ENCODE measurements at regions of chr2 and their contacts with region 1.

Region 1: DNA sequence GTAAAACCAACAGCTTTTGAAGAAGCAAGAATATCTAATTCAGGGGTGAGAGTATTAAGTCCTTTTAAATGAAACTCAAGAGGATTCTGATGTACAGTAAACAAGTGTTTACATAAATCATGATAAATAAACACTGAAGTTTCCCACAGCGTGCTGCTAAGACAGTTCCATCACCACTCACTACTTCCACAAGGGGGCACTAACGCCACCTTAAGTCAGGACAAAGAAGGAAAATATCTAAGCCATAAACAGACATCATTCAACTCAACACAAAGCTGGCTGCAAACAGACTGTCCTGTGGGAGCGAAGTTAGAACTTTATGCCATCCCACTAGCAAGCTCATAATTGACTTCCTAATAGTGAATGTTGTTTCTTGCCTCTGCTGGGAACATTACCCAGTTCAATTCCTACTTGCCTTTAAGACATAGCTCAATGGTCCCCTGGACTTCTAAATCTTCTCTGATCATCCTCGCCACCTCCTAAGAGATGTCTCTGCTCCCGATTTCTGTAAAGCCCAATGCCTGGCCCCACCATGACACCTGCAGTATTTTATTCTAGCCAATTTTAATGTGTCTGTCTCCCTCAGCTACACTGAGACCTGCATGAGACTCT is 36.5 kb downstream of the MRPL44 start:
- DNase-seq: peak; percentile 78
- ATAC-seq: peak; percentile 43
- H3K4me3 ChIP-seq: no peak overlapping the region
- H3K4me3 Mint-ChIP-seq: no peak overlapping the region
- H3K27ac ChIP-seq: no peak overlapping the region
- H3K27ac Mint-ChIP-seq: no peak overlapping the region
- H3K4me1 ChIP-seq: no peaks in the 10 kb centered on the region
- H3K4me1 Mint-ChIP-seq: no peaks in the 10 kb centered on the region
- H3K27me3 ChIP-seq: no peaks in the 10 kb centered on the region
- H3K27me3 Mint-ChIP-seq: no peaks in the 10 kb centered on the region
- CTCF ChIP-seq: peak; percentile 85

Region 2: GRCh38 chr2:224008702-224009261 is 15.1 kb after region 1 on chr2:
- CTCF ChIA-PET with region 1: interaction called, 28 read pairs
- POLR2A ChIA-PET with region 1: no interaction called
- intact Hi-C with region 1: no loop called
- DNase-seq: no peak
- ATAC-seq: no peak
- H3K4me3 ChIP-seq: no peak overlapping the region
- H3K4me3 Mint-ChIP-seq: no peak overlapping the region
- H3K27ac ChIP-seq: no peak overlapping the region
- H3K27ac Mint-ChIP-seq: no peak overlapping the region
- H3K4me1 ChIP-seq: no peaks in the 10 kb centered on the region
- H3K4me1 Mint-ChIP-seq: no peaks in the 10 kb centered on the region
- H3K27me3 ChIP-seq: no peaks in the 10 kb centered on the region
- H3K27me3 Mint-ChIP-seq: no peaks in the 10 kb centered on the region
- CTCF ChIP-seq: no peak

Region 3: DNA sequence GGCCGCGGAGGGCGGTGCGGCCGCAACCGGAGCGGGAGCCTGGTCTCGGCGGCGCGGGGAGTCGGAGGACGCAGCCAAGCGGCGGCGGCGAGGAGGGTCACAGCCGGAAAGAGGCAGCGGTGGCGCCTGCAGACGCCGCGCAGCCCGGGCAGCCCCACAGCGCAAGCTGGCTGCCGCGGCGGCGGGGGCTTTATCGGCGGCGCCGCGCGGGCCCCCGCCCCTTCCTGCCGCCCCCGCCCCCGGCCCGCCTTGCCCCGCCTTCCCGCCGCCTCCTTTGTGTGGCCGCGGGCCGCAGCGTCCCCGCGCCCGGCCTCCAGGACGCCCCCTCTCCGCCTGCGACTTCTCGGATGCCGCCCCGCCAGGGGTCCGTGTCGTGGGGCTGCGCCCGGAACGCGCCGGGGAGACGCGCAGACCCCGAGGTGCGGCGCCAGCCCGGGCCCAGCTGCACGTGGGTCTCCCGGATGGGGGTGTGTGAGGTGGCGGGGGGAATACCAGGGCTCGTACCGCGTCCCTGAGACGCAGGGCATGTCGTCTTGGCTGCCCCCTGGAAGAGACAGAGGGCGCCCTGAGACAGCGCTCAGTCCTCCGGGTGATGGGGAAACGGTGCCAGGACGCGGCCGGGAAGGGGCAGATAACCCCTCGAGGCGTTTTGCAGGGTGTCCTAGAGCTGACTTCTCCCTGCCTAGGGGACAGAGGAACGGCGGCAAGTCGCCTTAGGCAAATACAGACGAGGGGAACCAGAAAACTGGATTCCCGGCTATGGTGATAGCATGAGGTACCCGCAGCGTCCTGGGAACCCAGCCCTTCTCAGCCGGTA is 45.6 kb after region 1 on chr2 and contains the start of gene SERPINE2:
- CTCF ChIA-PET with region 1: interaction called, 4 read pairs
- POLR2A ChIA-PET with region 1: no interaction called
- intact Hi-C with region 1: loop called (anchors 2 kb)
- DNase-seq: peak; percentile 65
- ATAC-seq: peak; percentile 55
- H3K4me3 ChIP-seq: peak within 1 kb of the TSS; percentile 36 to 72 (median 56)
- H3K4me3 Mint-ChIP-seq: peak within 1 kb of the TSS; percentile 94
- H3K27ac ChIP-seq: no peak within 1 kb of the TSS
- H3K27ac Mint-ChIP-seq: no peak within 1 kb of the TSS
- H3K4me1 ChIP-seq: peaks cover 13 to 18% of the 10 kb centered on the region in 2 donors
- H3K4me1 Mint-ChIP-seq: peaks cover 19% of the 10 kb centered on the region
- H3K27me3 ChIP-seq: peaks cover 0 to 55% (median 20%) of the 10 kb centered on the region in 4 experiments
- H3K27me3 Mint-ChIP-seq: peaks cover 64% of the 10 kb centered on the region
- CTCF ChIP-seq: no peak
- total RNA-seq, gene SERPINE2: 1.2 and 1.8 TPM in 2 replicates

Region 4: GRCh38 chr2:224284134-224284946 is 290.6 kb after region 1 on chr2:
- CTCF ChIA-PET with region 1: interaction called, 307 read pairs
- POLR2A ChIA-PET with region 1: no interaction called
- intact Hi-C with region 1: loop called (anchors 1 kb)
- DNase-seq: peak; percentile 64
- ATAC-seq: no peak
- H3K4me3 ChIP-seq: no peak overlapping the region
- H3K4me3 Mint-ChIP-seq: no peak overlapping the region
- H3K27ac ChIP-seq: no peak overlapping the region
- H3K27ac Mint-ChIP-seq: no peak overlapping the region
- H3K4me1 ChIP-seq: no peaks in the 10 kb centered on the region
- H3K4me1 Mint-ChIP-seq: no peaks in the 10 kb centered on the region
- H3K27me3 ChIP-seq: peaks cover 0 to 10% (median 0%) of the 10 kb centered on the region in 4 experiments
- H3K27me3 Mint-ChIP-seq: peaks cover 34% of the 10 kb centered on the region
- CTCF ChIP-seq: peak; percentile 82

Region 5: DNA sequence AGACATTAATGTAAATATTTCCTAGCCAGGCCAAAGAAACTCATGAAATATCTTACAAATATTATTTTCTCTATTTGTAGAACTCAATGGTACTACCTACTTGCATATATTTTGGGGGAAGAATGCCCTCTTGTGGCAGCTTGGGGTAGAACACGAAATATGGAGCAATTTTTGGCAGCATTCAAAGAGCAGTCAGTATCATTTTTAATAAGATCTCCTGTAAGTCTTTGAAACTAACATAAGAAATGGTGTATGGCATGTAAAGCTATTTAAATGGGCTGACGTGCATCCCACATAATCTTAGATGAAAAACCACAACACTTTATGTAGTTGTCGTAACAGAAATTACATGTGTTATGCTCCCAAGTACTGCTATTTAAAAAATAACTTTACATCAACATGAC is 784.7 kb after region 1 on chr2:
- CTCF ChIA-PET with region 1: interaction called, 10 read pairs
- POLR2A ChIA-PET with region 1: no interaction called
- intact Hi-C with region 1: no loop called
- DNase-seq: peak; percentile 72
- ATAC-seq: no peak
- H3K4me3 ChIP-seq: no peak overlapping the region
- H3K4me3 Mint-ChIP-seq: no peak overlapping the region
- H3K27ac ChIP-seq: no peak overlapping the region
- H3K27ac Mint-ChIP-seq: no peak overlapping the region
- H3K4me1 ChIP-seq: no peaks in the 10 kb centered on the region
- H3K4me1 Mint-ChIP-seq: no peaks in the 10 kb centered on the region
- H3K27me3 ChIP-seq: no peaks in the 10 kb centered on the region
- H3K27me3 Mint-ChIP-seq: no peaks in the 10 kb centered on the region
- CTCF ChIP-seq: peak; percentile 97